ENCODE measurements at regions of chrX and their contacts with region 1.

Region 1: DNA sequence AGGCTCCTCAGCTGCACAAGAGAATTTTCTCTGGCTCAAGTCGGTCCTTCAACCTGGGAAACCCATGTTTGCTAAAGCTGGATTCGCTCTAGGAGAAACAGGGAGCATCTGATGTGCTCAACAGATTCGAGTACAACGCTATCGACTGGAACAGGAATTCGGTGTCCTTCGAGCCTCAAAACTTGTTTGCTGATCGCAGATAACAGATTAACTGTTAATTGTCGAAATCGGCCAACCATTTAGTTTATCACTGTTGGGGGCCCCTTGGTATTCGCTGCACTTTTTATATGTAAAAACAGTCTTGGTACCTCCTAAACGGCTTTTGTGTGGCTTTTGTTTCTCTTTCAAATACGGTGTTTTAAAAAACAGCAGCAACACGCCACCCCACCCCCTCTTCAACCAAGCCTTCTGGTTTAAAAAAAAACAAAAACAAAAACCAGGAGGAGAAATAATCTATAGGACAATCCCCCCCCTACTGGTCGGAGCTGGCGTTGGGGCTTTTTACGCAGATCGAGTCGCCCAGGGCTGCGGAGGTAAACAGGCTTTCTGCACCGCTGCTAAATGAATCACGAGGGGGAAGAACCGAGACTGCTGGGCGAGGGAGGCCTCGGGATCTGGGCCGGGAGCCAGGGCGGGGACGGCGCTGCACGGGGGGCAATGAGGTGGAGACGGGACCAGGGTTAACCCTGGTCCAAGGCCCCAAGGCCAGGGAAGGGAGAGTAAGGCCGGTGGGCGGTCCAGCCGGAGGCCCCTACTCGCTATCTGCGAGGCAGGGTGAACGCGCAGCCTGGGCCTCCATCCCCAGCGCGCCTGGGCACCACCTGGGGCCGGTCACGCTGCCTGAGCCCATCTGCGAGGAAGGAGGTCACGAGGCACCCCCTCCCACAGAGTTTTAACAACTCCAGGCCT is 71.7 kb upstream of the BCOR start:
- DNase-seq: peak; percentile 74 to 83
- ATAC-seq: peak; percentile 31

Region 2: DNA sequence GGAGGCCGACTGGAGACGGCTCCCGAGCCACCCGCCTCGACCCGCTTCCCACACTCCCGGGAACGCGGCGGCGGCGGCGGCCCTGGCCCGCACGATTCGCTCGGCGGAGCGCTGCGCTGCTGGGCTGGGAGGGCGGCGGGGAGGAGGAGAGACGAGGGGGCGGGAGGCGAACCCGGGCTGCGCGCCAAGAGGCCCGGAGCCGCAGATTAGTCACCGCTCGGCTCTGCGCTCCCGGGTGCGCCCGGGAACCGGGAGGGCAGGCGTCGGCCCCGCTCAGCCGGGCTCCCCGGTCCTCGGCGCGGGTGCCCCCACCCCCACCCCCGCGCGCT is 60.5 kb before region 1 on chrX:
- intact Hi-C with region 1: loop called in 1 of 2 experiments (anchors 5 kb)
- DNase-seq: peak; percentile 77 to 82
- ATAC-seq: peak; percentile 63